ENCODE measurements at regions of chrX and their contacts with region 1.

Region 1: DNA sequence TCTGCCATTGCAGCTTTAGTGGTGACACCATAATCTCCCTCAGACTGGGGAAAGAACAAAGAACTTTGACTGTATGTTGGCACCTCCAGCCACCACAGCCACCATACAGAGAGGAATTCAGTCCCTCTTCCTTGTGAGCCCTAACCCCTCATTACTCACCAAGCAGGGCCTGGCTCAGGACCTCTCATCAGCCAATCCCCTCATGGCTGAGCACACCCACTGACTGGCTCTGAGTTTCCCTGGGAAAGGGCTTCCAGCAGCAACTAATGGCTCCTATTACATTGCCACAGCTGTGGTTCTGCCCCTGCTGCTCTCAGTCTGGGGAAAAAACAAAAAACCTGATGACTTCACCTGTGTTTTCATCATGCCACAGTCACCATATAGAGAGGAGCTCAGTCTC is 1482.6 kb downstream of the FAM133A start:
- DNase-seq: no peak
- ATAC-seq: no peak
- H3K4me3 ChIP-seq: no peak overlapping the region
- H3K27ac ChIP-seq: no peak overlapping the region
- H3K4me1 ChIP-seq: no peaks in the 10 kb centered on the region
- H3K27me3 ChIP-seq: no peaks in the 10 kb centered on the region
- CTCF ChIP-seq: no peak
- POLR2A ChIP-seq: no peak

Region 2: GRCh38 chrX:95248386-95248785 is 91.8 kb after region 1 on chrX:
- in situ Hi-C with region 1: loop called in 1 of 4 experiments (anchors 25 kb)
- intact Hi-C with region 1: no loop called
- DNase-seq: no peak
- ATAC-seq: no peak
- H3K4me3 ChIP-seq: no peak overlapping the region
- H3K27ac ChIP-seq: no peak overlapping the region
- H3K4me1 ChIP-seq: no peaks in the 10 kb centered on the region
- H3K27me3 ChIP-seq: no peaks in the 10 kb centered on the region
- CTCF ChIP-seq: no peak
- POLR2A ChIP-seq: no peak